Right ventricle myocardium inferior (tissue), 1 donor: ENCODE measurements at regions of chr13 and their contacts with region 1.

Region 1: GRCh38 chr13:22168437-22169190 is 497.7 kb downstream of the FGF9 start:
- DNase-seq: no peak
- ATAC-seq: no peak

Region 2: GRCh38 chr13:22086597-22087330 is 81.8 kb before region 1 on chr13:
- intact Hi-C with region 1: no loop called
- DNase-seq: no peak
- ATAC-seq: no peak

Region 3: GRCh38 chr13:22387899-22388298 is 219.3 kb after region 1 on chr13:
- intact Hi-C with region 1: no loop called
- DNase-seq: no peak
- ATAC-seq: peak; percentile 20

Region 4: GRCh38 chr13:22757530-22758120 is 589.0 kb after region 1 on chr13:
- intact Hi-C with region 1: loop called (anchors 5 kb)
- DNase-seq: no peak
- ATAC-seq: no peak